ENCODE measurements at regions of chr3 and their contacts with region 1.

Region 1: DNA sequence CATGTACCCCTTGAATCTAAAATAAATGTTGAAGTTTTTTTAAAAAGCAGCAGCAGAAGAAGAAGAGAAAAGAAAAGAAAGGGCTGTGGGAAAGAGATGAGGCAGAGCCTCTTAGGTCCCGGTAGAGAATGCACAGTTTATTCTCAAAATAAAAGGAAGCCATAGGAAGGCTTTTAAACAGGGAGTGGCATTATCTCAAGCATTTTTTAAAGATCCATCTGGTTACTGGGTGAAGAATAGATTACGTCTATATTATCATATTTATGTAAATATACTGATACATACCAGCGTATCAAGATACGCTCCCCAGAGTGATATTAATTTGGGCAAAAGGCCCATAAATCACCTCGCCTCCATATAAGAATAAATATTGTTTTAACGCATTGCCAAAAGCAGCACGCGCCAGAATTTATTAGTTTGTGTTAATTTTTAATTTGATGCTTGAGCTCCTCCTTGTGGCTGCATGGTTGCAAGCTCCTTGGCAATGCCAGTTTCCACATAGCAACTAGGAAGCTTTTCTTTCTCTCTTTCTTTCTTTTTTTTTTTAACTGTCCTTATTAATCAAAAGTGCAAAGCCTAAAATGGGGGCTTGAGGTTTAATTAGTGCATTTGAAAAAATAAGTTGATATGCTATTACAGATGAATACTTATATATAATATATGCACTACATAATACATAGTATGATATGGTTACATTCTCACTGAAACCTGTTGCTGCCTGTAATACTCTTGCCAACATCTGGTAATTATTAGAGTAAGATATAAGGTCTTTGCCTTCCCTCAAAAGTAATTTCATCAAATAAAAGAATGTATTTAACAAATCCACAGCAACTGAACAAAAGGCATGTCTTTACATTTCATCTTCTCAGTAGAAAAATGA is 242.8 kb upstream of the UBE2E2 start:
- DNase-seq: no peak
- ATAC-seq: peak; percentile 73
- H3K4me3 ChIP-seq: no peak overlapping the region
- H3K27ac ChIP-seq: no peak overlapping the region
- H3K4me1 ChIP-seq: peaks cover 11% of the 10 kb centered on the region; the same call in 1 of the 2 replicates
- H3K27me3 ChIP-seq: no peaks in the 10 kb centered on the region
- CTCF ChIP-seq: peak; percentile 63 to 76 (median 74)
- EP300 ChIP-seq: no peak
- POLR2A ChIP-seq: no peak
- RAD21 ChIP-seq: peak; percentile 83

Region 2: DNA sequence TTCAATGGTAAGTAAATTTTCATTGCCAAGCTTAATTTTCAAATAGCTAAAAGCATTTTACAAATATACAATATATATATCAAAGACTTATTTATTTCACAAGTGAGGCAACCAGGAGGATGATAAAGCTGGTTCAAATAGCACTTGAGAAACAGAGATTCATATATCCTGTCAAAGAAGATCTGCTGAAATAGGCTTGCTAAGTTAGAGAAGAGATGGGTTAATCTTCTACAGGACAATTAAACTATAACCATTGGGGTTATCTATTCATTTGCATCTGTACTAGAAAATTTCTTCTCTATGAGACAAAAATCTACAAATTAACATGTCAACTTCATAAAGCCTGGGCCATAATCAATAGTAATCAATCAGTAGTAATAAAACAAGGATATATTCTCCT is 395.0 kb before region 1 on chr3:
- CTCF ChIA-PET with region 1: interaction called, 28 read pairs
- POLR2A ChIA-PET with region 1: no interaction called
- RAD21 ChIA-PET with region 1: interaction called, 8 read pairs
- SMC1A ChIA-PET with region 1: interaction called, 7 read pairs
- in situ Hi-C with region 1: loop called (anchors 10 kb)
- intact Hi-C with region 1: loop called (anchors 1 kb)
- DNase-seq: no peak
- ATAC-seq: no peak
- H3K4me3 ChIP-seq: no peak overlapping the region
- H3K27ac ChIP-seq: no peak overlapping the region
- H3K4me1 ChIP-seq: no peaks in the 10 kb centered on the region
- H3K27me3 ChIP-seq: no peaks in the 10 kb centered on the region
- CTCF ChIP-seq: no peak
- EP300 ChIP-seq: no peak
- POLR2A ChIP-seq: no peak
- RAD21 ChIP-seq: no peak

Region 3: GRCh38 chr3:22729985-22730384 is 230.4 kb before region 1 on chr3:
- CTCF ChIA-PET with region 1: no interaction called
- POLR2A ChIA-PET with region 1: no interaction called
- RAD21 ChIA-PET with region 1: no interaction called
- SMC1A ChIA-PET with region 1: no interaction called
- in situ Hi-C with region 1: no loop called
- intact Hi-C with region 1: loop called (anchors 5 kb)
- DNase-seq: no peak
- ATAC-seq: peak; percentile 44; the same call in 1 of the 3 replicates
- H3K4me3 ChIP-seq: no peak overlapping the region
- H3K27ac ChIP-seq: no peak overlapping the region
- H3K4me1 ChIP-seq: no peaks in the 10 kb centered on the region
- H3K27me3 ChIP-seq: no peaks in the 10 kb centered on the region
- CTCF ChIP-seq: peak in 1 of 3 experiments; percentile 4; a peak in 1 of 6 replicates
- EP300 ChIP-seq: no peak
- POLR2A ChIP-seq: no peak
- RAD21 ChIP-seq: peak; percentile 37; the same call in 1 of the 2 replicates

Region 4: GRCh38 chr3:22922317-22922716 is 38.0 kb before region 1 on chr3:
- CTCF ChIA-PET with region 1: interaction called, 36 read pairs
- POLR2A ChIA-PET with region 1: no interaction called
- RAD21 ChIA-PET with region 1: interaction called, 13 read pairs
- SMC1A ChIA-PET with region 1: interaction called, 13 read pairs
- in situ Hi-C with region 1: no loop called
- intact Hi-C with region 1: loop called (anchors 2 kb)
- DNase-seq: no peak
- ATAC-seq: peak; percentile 77
- H3K4me3 ChIP-seq: no peak overlapping the region
- H3K27ac ChIP-seq: no peak overlapping the region
- H3K4me1 ChIP-seq: no peaks in the 10 kb centered on the region
- H3K27me3 ChIP-seq: no peaks in the 10 kb centered on the region
- CTCF ChIP-seq: peak; percentile 20 to 34 (median 20); a peak in 2 of 6 replicates
- EP300 ChIP-seq: no peak
- POLR2A ChIP-seq: no peak
- RAD21 ChIP-seq: peak; percentile 45; the same call in 1 of the 2 replicates

Region 5: GRCh38 chr3:22942981-22943380 is 17.4 kb before region 1 on chr3:
- CTCF ChIA-PET with region 1: interaction called, 14 read pairs
- POLR2A ChIA-PET with region 1: no interaction called
- RAD21 ChIA-PET with region 1: no interaction called
- SMC1A ChIA-PET with region 1: interaction called, 8 read pairs
- in situ Hi-C with region 1: no loop called
- intact Hi-C with region 1: no loop called
- DNase-seq: no peak
- ATAC-seq: no peak
- H3K4me3 ChIP-seq: no peak overlapping the region
- H3K27ac ChIP-seq: no peak overlapping the region
- H3K4me1 ChIP-seq: no peaks in the 10 kb centered on the region
- H3K27me3 ChIP-seq: peaks cover 0 to 3% of the 10 kb centered on the region in 2 experiments; a peak in 1 of 4 replicates
- CTCF ChIP-seq: no peak
- EP300 ChIP-seq: no peak
- POLR2A ChIP-seq: no peak
- RAD21 ChIP-seq: no peak

Region 6: GRCh38 chr3:23435318-23435717 is 475.0 kb after region 1 on chr3:
- CTCF ChIA-PET with region 1: no interaction called
- POLR2A ChIA-PET with region 1: no interaction called
- RAD21 ChIA-PET with region 1: no interaction called
- SMC1A ChIA-PET with region 1: no interaction called
- in situ Hi-C with region 1: no loop called
- intact Hi-C with region 1: no loop called
- DNase-seq: no peak
- ATAC-seq: no peak; the same call in 1 of the 3 replicates
- H3K4me3 ChIP-seq: no peak overlapping the region
- H3K27ac ChIP-seq: no peak overlapping the region
- H3K4me1 ChIP-seq: peaks cover 12% of the 10 kb centered on the region
- H3K27me3 ChIP-seq: no peaks in the 10 kb centered on the region
- CTCF ChIP-seq: no peak
- EP300 ChIP-seq: no peak
- POLR2A ChIP-seq: no peak
- RAD21 ChIP-seq: no peak

Region 7: DNA sequence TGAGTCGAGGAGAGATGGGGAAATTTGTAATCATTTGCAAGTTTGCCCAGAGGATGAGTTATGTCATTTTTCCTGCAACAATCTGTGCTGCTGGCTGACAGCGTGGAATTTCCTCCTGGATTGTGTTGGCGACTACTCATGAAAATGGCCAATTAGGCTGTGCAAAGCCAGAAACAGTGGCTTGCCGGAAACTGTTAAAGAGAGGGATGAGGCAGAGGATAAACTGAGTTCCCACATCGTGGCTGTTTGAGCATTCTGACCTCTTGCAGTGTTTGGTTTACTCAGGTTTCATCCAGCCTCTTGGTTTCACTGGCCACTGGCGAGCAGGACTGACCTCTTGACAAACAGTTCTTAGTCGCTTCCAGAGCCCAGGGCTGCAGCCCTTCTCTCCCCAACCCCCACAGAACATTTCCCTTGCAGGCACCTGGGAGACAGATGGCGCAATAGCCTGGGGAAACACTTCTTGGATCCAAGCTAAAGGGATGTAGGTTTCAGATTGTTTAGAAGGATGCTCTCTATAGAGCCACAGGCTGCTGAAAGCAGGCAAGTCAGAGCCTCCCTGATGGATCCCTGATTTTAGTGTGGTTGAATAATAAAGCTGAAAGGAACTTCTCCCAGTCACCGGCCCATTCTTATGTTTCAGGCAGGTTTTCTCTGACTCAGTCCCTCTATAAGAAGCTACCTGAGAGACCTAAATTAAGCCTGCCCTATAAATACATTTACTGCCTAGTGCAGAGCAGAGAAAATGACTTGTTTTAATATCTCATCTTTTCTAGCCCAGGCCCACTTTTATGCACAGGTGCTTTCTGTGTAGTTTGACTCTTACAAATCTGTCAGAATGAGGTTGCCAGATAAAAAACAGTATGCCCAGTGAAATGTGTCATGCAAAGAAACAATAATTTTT is 752.6 kb after region 1 on chr3:
- CTCF ChIA-PET with region 1: no interaction called
- POLR2A ChIA-PET with region 1: no interaction called
- RAD21 ChIA-PET with region 1: no interaction called
- SMC1A ChIA-PET with region 1: no interaction called
- in situ Hi-C with region 1: no loop called
- intact Hi-C with region 1: no loop called
- DNase-seq: no peak
- ATAC-seq: no peak
- H3K4me3 ChIP-seq: no peak overlapping the region
- H3K27ac ChIP-seq: no peak overlapping the region
- H3K4me1 ChIP-seq: peaks cover 3% of the 10 kb centered on the region; the same call in 1 of the 2 replicates
- H3K27me3 ChIP-seq: no peaks in the 10 kb centered on the region
- CTCF ChIP-seq: peak in 1 of 3 experiments; percentile 20; a peak in 1 of 6 replicates
- EP300 ChIP-seq: no peak
- POLR2A ChIP-seq: no peak
- RAD21 ChIP-seq: no peak

Measured in GM12878 (cell line).